Activated CD4-positive, alpha-beta T cell treated with anti-CD3 and anti-CD28 coated beads for 36 hours (primary cell): ENCODE measurements at regions of chr1 and their contacts with region 1.

Region 1: GRCh38 chr1:225977937-225978748 is 21.0 kb downstream of the SDE2 start:
- DNase-seq: no peak
- ATAC-seq: no peak
- H3K4me3 Mint-ChIP-seq: no peak overlapping the region
- H3K27ac Mint-ChIP-seq: no peak overlapping the region
- H3K4me1 Mint-ChIP-seq: peaks cover 6% of the 10 kb centered on the region
- H3K27me3 Mint-ChIP-seq: no peaks in the 10 kb centered on the region

Region 2: DNA sequence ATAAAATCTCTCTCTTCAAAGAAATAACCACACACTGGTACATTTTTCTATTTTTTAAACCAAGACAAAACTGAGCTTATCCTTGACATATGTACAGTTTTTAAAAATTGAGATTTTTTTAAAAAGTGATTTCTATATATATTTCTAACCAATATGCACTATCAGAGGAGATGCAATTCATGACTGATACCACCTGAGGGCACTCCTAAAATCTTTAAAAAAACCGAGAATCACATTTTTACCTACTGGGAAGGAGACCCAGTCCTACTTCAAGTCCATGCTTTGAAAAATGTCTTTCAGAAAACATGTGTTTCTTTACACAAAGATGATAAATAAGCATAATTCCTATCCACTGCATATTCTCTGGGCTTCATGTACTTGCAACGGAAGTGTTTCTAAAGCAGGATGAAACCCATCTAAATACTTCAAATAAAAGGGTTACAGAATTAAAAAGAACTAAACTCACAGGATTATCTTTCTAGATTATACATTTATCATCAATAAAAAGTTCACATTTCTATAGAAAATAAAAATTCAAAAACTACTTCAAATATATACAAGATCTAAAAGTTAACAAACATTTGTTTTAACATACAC is 423.8 kb before region 1 on chr1:
- CTCF ChIA-PET with region 1: no interaction called
- POLR2A ChIA-PET with region 1: no interaction called
- intact Hi-C with region 1: loop called (anchors 1 kb)
- DNase-seq: no peak
- ATAC-seq: no peak
- H3K4me3 Mint-ChIP-seq: no peak overlapping the region
- H3K27ac Mint-ChIP-seq: no peak overlapping the region
- H3K4me1 Mint-ChIP-seq: no peaks in the 10 kb centered on the region
- H3K27me3 Mint-ChIP-seq: no peaks in the 10 kb centered on the region

Region 3: DNA sequence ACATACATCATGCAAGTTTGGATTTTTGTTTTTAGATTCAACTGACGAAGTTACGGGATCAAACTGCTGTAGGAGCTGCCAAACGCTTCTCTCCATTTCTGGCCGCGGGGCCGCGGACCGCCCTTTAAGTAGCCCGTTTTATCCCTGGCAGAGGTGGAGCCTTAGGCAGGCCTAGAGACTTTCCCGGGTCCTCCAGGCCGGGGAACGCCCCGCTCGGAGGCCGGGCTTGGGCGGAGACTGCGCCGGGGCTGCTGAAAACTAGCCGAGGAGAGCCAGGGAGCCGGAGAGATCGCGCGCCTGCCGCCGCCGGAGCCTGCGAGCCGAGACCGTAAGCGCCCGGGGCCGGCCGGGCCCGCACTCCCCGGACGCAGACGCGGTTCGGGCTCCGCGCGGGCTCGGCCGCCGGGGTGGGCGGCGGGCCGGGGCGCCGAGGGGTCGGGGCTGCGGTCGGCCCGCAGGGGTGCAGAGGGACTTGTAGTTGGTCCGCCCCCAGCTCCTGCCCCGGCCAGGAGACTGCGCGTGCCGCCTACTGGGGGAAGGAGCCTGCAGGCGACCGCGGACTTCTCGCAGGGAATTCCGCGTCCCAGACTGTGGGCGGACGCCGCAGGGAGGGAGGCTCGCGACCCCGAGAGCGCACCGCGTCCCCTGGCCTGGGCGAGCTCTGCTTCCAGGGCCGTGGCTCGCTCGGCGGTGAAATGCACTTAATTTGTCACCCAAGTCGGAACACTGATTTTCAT is 168.1 kb before region 1 on chr1 and contains the start of gene EPHX1:
- CTCF ChIA-PET with region 1: no interaction called
- POLR2A ChIA-PET with region 1: no interaction called
- intact Hi-C with region 1: loop called in 1 of 2 experiments (anchors 1 kb)
- DNase-seq: peak; percentile 84
- ATAC-seq: peak; percentile 98
- H3K4me3 Mint-ChIP-seq: peak within 1 kb of the TSS; percentile 75
- H3K27ac Mint-ChIP-seq: no peak within 1 kb of the TSS
- H3K4me1 Mint-ChIP-seq: peaks cover 8% of the 10 kb centered on the region
- H3K27me3 Mint-ChIP-seq: peaks cover 4% of the 10 kb centered on the region
- total RNA-seq, gene EPHX1: 2.5 to 2.6 TPM

Region 4: GRCh38 chr1:225923692-225924555 is 54.2 kb before region 1 on chr1 and contains the start of gene PYCR2:
- CTCF ChIA-PET with region 1: interaction called, 3 read pairs
- POLR2A ChIA-PET with region 1: no interaction called
- intact Hi-C with region 1: loop called (anchors 2 to 5 kb)
- DNase-seq: peak; percentile 97
- ATAC-seq: peak; percentile 97
- H3K4me3 Mint-ChIP-seq: peak within 1 kb of the TSS; percentile 93
- H3K27ac Mint-ChIP-seq: peak within 1 kb of the TSS; percentile 96
- H3K4me1 Mint-ChIP-seq: peaks cover 54% of the 10 kb centered on the region
- H3K27me3 Mint-ChIP-seq: no peaks in the 10 kb centered on the region
- total RNA-seq, gene PYCR2: 106 to 126 TPM

Region 5: DNA sequence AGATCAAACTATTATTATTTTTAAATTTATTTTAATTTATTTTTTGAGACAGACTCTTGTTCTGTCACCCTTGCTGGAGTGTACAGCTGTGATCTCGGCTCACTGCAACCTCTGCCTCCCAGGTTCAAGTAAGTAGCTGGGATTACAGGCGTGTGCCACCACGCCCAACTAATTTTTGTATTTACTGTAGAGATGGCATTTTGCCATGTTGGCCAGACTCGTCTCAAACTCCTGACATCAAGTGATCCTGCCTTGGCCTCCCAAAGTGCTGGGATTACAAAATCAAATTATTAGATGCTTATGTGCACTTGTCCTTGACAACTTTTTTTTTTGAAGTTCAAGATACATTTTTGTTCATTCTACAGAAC is 315.4 kb after region 1 on chr1:
- CTCF ChIA-PET with region 1: no interaction called
- POLR2A ChIA-PET with region 1: no interaction called
- intact Hi-C with region 1: no loop called
- DNase-seq: no peak
- ATAC-seq: no peak
- H3K4me3 Mint-ChIP-seq: no peak overlapping the region
- H3K27ac Mint-ChIP-seq: no peak overlapping the region
- H3K4me1 Mint-ChIP-seq: no peaks in the 10 kb centered on the region
- H3K27me3 Mint-ChIP-seq: no peaks in the 10 kb centered on the region